Caco-2 (cell line): ENCODE measurements at regions of chr11 and their contacts with region 1.

Region 1: DNA sequence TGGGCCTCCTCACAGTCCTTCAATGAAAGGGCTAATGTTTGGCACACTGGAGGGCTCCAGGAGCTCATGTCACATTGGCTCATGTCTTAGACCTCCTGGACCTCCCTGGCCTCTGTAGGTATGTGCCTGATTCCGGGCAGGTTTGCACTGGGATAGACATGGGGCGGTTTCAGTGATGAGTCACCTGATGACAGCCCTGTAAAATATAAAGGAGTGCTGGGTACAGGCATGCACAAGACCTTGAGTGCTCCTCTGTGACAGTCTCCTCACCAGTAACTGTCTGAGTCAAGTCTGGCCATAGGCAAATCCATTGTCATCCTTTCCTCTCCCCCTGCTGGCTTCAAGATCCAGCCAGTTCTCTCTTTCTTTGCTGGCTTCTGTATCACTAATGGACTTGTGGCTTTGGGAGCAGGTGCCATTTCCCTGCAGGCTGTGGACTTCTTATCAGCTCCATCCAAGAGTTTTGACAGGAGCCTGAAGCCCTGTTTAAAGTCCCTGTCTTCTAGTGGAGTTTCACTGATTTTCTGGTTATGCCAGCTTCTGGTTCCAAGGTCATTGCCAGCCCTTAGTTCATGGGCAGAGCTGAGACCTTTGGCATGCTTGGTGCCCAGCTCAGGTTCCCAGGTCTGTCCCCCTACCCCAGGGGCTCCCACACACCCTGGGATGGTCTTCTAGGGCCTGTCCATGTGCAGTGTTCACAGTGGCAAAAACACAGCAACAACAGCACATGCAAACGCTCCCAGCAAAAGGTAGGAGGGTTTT is 22.7 kb upstream of the P2RY2 start:
- DNase-seq: peak; percentile 77 to 93
- H3K4me3 ChIP-seq: no peak overlapping the region
- H3K4me3 Mint-ChIP-seq: peak overlapping the region; percentile 6
- H3K27ac Mint-ChIP-seq: peak overlapping the region; percentile 30
- H3K4me1 ChIP-seq: peaks cover 81% of the 10 kb centered on the region
- H3K4me1 Mint-ChIP-seq: peaks cover 65% of the 10 kb centered on the region
- H3K27me3 ChIP-seq: no peaks in the 10 kb centered on the region
- H3K27me3 Mint-ChIP-seq: no peaks in the 10 kb centered on the region
- CTCF ChIP-seq: peak in 1 of 2 experiments; percentile 2

Region 2: GRCh38 chr11:73218106-73218829 is 22.9 kb after region 1 on chr11 and contains the start of gene P2RY2:
- CTCF ChIA-PET with region 1: interaction called, 5 read pairs
- POLR2A ChIA-PET with region 1: no interaction called
- intact Hi-C with region 1: loop called (anchors 1 kb)
- DNase-seq: peak; percentile 87 to 94
- H3K4me3 ChIP-seq: peak within 1 kb of the TSS; percentile 57
- H3K4me3 Mint-ChIP-seq: peak within 1 kb of the TSS; percentile 81
- H3K27ac Mint-ChIP-seq: peak within 1 kb of the TSS; percentile 40
- H3K4me1 ChIP-seq: peaks cover 38% of the 10 kb centered on the region
- H3K4me1 Mint-ChIP-seq: peaks cover 23% of the 10 kb centered on the region
- H3K27me3 ChIP-seq: no peaks in the 10 kb centered on the region
- H3K27me3 Mint-ChIP-seq: no peaks in the 10 kb centered on the region
- CTCF ChIP-seq: peak; percentile 87
- total RNA-seq, gene P2RY2: 10.4 and 11.4 TPM in 2 replicates

Region 3: GRCh38 chr11:73227588-73228211 is 32.3 kb after region 1 on chr11:
- CTCF ChIA-PET with region 1: interaction called, 4 read pairs
- POLR2A ChIA-PET with region 1: no interaction called
- intact Hi-C with region 1: loop called (anchors 1 kb)
- DNase-seq: peak; percentile 97 to 98
- H3K4me3 ChIP-seq: no peak overlapping the region
- H3K4me3 Mint-ChIP-seq: no peak overlapping the region
- H3K27ac Mint-ChIP-seq: peak overlapping the region; percentile 64
- H3K4me1 ChIP-seq: peaks cover 39% of the 10 kb centered on the region
- H3K4me1 Mint-ChIP-seq: peaks cover 43% of the 10 kb centered on the region
- H3K27me3 ChIP-seq: no peaks in the 10 kb centered on the region
- H3K27me3 Mint-ChIP-seq: no peaks in the 10 kb centered on the region
- CTCF ChIP-seq: peak; percentile 78 to 96